ENCODE measurements at regions of chr9 and their contacts with region 1.

Region 1: GRCh38 chr9:36995927-36996705 is 38.0 kb downstream of the PAX5 start:
- DNase-seq: peak; percentile 68
- CTCF ChIP-seq: peak; percentile 75

Region 2: GRCh38 chr9:36980148-36980974 is 15.8 kb before region 1 on chr9:
- CTCF ChIA-PET with region 1: interaction called, 30 read pairs
- POLR2A ChIA-PET with region 1: no interaction called
- DNase-seq: peak; percentile 53
- CTCF ChIP-seq: peak; percentile 27

Region 3: GRCh38 chr9:37027582-37028419 is 31.7 kb after region 1 on chr9:
- CTCF ChIA-PET with region 1: interaction called, 33 read pairs
- POLR2A ChIA-PET with region 1: interaction called, 11 read pairs
- DNase-seq: peak; percentile 99
- CTCF ChIP-seq: no peak

Region 4: GRCh38 chr9:37329576-37329975 is 333.5 kb after region 1 on chr9:
- CTCF ChIA-PET with region 1: interaction called, 31 read pairs
- POLR2A ChIA-PET with region 1: interaction called, 3 read pairs
- DNase-seq: no peak
- CTCF ChIP-seq: peak; percentile 65

Region 5: DNA sequence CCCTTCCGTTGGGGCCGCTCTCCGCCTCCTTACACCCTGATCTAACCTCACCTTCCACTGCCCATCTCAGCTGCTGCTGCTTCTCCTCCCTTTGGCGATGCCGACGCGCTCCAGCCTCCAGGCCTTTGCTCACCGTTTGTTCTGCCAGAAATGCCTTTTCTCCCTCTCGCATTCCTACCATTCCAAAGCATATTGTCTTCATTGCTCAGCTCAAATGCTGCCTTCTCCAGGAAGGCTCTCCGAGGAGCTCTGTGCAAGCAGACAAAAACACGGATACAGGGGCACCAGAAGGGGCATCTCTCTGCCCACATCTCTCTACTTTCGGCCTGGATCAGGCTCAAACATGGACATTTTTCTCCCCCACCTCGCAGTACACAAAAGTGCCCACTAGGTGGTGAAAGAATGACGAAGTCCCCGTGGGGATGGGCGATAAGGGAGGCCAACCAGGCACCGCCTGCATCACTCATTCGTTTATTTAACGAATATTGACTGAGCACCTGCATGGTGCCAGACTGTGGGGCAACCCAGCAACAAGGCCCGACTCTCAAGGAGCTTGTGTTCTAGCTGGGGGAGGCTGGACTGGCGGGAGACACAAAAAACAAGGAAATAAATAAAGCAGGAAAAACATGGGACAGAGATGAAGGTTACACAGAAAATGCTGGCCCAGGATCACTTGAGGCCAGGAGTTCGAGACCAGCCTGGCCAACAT is 419.0 kb after region 1 on chr9:
- CTCF ChIA-PET with region 1: interaction called, 43 read pairs
- POLR2A ChIA-PET with region 1: no interaction called
- DNase-seq: peak; percentile 76
- CTCF ChIP-seq: peak; percentile 81